Dendritic cell treated with granulocyte-macrophage colony-stimulating factor and Interleukin-4, amounts not matched to agents 40 ng/mL and 50 ng/mL, for 4 days (primary cell): ENCODE measurements at regions of chr3 and their contacts with region 1.

Region 1: DNA sequence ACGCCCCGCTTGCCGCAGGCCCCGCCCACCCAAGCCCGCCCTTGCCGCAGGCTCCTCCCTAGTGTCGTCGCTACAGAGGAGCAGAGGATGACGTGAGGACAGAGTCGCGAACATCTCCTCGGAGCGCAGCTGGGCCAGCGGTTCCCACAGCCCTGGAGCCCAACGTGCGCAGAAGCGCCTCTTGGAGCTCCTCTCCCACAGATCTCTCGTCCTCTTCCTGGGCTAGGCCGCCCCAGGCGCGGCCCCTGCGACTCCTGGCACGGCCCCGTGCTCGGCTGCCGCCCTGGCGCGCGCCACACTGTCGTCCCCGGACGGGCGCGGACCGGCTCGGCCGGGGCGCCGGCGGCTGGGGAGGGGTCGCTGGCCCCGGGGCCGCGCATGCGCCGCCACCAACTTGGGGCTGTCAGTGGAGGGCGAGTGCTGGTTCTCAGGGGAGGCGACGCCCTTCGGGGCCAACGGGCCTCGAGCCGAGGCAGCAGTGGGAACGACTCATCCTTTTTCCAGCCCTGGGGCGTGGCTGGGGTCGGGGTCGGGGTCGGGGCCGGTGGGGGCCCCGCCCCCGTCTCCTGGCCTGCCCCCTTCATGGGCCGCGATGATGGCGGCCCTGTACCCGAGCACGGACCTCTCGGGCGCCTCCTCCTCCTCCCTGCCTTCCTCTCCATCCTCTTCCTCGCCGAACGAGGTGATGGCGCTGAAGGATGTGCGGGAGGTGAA is at the start of gene TRPC1:
- H3K4me3 Mint-ChIP-seq: peak within 1 kb of the TSS; percentile 78
- H3K27ac Mint-ChIP-seq: peak within 1 kb of the TSS; percentile 46
- H3K4me1 Mint-ChIP-seq: peaks cover 8% of the 10 kb centered on the region
- H3K27me3 Mint-ChIP-seq: peaks cover 52% of the 10 kb centered on the region

Region 2: DNA sequence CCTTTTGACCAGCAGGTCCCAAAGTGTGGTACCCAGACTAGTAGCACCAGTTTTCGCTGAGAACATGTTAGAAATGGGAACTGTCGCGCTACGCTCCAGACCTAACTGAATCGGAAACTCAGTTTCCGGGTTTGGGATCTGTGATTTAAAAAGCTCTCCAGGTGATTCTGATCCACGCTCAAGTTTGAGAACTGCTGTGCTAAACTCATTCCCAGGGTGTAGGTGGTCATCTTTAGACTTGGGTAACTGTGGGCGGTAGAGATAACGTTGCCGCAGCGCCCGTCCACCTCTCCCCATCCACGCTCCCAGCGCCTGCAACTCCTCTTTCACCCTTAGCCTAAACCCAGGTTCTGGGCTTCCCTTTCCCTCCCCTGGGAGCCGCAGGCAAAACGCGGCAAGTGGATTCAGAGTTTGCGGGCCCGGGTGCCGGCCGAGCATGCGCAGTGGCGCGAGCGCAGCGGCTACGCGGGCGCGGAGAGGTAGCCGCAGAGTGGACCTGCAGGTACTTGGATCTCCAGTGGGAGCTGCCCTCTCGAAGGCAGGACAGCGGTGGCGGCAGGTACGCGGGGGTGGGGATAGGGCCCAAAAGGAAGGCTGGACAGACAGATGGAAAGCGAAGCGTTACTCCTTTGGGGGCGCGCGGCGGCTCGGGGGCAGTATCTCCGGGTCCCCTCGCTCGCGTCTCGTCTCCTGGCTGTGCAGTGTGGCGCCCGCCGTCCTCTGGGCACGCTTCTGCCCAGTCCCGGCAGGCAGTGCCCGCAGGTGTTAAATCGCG is 128.0 kb before region 1 on chr3 and contains the start of gene PLS1:
- intact Hi-C with region 1: loop called (anchors 10 kb)
- H3K4me3 Mint-ChIP-seq: peak within 1 kb of the TSS; percentile 94
- H3K27ac Mint-ChIP-seq: peak within 1 kb of the TSS; percentile 79
- H3K4me1 Mint-ChIP-seq: peaks cover 7% of the 10 kb centered on the region
- H3K27me3 Mint-ChIP-seq: peaks cover 16% of the 10 kb centered on the region

Region 3: GRCh38 chr3:143098032-143098764 is 374.1 kb after region 1 on chr3:
- intact Hi-C with region 1: no loop called
- H3K4me3 Mint-ChIP-seq: no peak overlapping the region
- H3K27ac Mint-ChIP-seq: no peak overlapping the region
- H3K4me1 Mint-ChIP-seq: no peaks in the 10 kb centered on the region
- H3K27me3 Mint-ChIP-seq: peaks cover 1% of the 10 kb centered on the region